ENCODE measurements at regions of chr7 and their contacts with region 1.

Region 1: GRCh38 chr7:40551685-40552576 is 417.1 kb downstream of the SUGCT start:
- DNase-seq: peak; percentile 83 to 85 (median 84)
- H3K4me3 ChIP-seq: peak overlapping the region; percentile 3 to 59 (median 36)
- H3K4me3 Mint-ChIP-seq: peak overlapping the region; percentile 47 to 83
- H3K27ac ChIP-seq: peak overlapping the region; percentile 76 to 90
- H3K27ac Mint-ChIP-seq: no peak overlapping the region
- H3K4me1 ChIP-seq: peaks cover 29 to 31% of the 10 kb centered on the region in 2 donors
- H3K4me1 Mint-ChIP-seq: peaks cover 13% of the 10 kb centered on the region
- H3K27me3 ChIP-seq: no peaks in the 10 kb centered on the region
- H3K27me3 Mint-ChIP-seq: no peaks in the 10 kb centered on the region
- CTCF ChIP-seq: no peak

Region 2: DNA sequence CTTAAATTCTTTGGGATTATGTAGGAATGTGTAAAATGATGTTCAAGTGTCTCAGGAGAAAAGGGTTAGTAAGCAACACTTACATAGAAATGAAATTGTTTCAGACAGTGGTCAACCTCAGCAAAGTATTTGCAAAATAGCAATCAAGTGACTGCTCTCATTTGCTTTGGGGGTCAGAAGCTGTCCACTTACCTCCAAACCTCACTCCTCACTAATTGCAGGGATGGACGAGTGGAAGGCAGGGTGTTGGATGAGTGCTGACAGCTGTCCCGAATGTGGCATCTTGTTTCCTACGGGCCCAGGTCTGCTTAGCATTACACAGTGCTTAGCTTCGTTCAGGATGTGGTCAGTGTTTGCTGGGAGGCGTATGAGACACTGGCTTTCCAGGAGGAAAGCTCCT is 19.9 kb after region 1 on chr7:
- intact Hi-C with region 1: no loop called
- DNase-seq: no peak
- H3K4me3 ChIP-seq: no peak overlapping the region
- H3K4me3 Mint-ChIP-seq: no peak overlapping the region
- H3K27ac ChIP-seq: no peak overlapping the region
- H3K27ac Mint-ChIP-seq: no peak overlapping the region
- H3K4me1 ChIP-seq: no peaks in the 10 kb centered on the region
- H3K4me1 Mint-ChIP-seq: peaks cover 2% of the 10 kb centered on the region
- H3K27me3 ChIP-seq: no peaks in the 10 kb centered on the region
- H3K27me3 Mint-ChIP-seq: peaks cover 0 to 3% (median 1%) of the 10 kb centered on the region in 3 donors
- CTCF ChIP-seq: no peak

Region 3: GRCh38 chr7:40583667-40584444 is 31.9 kb after region 1 on chr7:
- intact Hi-C with region 1: loop called in 1 of 2 experiments (anchors 2 kb)
- DNase-seq: no peak
- H3K4me3 ChIP-seq: no peak overlapping the region
- H3K4me3 Mint-ChIP-seq: no peak overlapping the region
- H3K27ac ChIP-seq: no peak overlapping the region
- H3K27ac Mint-ChIP-seq: peak overlapping the region in 1 of 7 donors; percentile 40
- H3K4me1 ChIP-seq: peaks cover 18 to 25% of the 10 kb centered on the region in 2 donors
- H3K4me1 Mint-ChIP-seq: peaks cover 36% of the 10 kb centered on the region
- H3K27me3 ChIP-seq: no peaks in the 10 kb centered on the region
- H3K27me3 Mint-ChIP-seq: no peaks in the 10 kb centered on the region
- CTCF ChIP-seq: no peak